BJ (cell line): ENCODE measurements at regions of chr15 and their contacts with region 1.

Region 1: GRCh38 chr15:91077029-91077428 is 23.0 kb upstream of the SV2B start:
- DNase-seq: no peak
- H3K4me3 ChIP-seq: no peak overlapping the region
- H3K27me3 ChIP-seq: no peaks in the 10 kb centered on the region
- CTCF ChIP-seq: no peak

Region 2: GRCh38 chr15:91357011-91357410 is 280.0 kb after region 1 on chr15:
- CTCF ChIA-PET with region 1: no interaction called
- POLR2A ChIA-PET with region 1: no interaction called
- DNase-seq: no peak
- H3K4me3 ChIP-seq: no peak overlapping the region
- H3K27me3 ChIP-seq: no peaks in the 10 kb centered on the region
- CTCF ChIP-seq: no peak

Region 3: GRCh38 chr15:91992945-91993344 is 915.9 kb after region 1 on chr15:
- CTCF ChIA-PET with region 1: no interaction called
- POLR2A ChIA-PET with region 1: interaction called, 10 read pairs
- DNase-seq: no peak
- H3K4me3 ChIP-seq: no peak overlapping the region
- H3K27me3 ChIP-seq: no peaks in the 10 kb centered on the region
- CTCF ChIP-seq: no peak